GM12878 (cell line): ENCODE measurements at regions of chr2 and their contacts with region 1.

Region 1: GRCh38 chr2:66832646-66833435 is 397.9 kb downstream of the MEIS1 start:
- DNase-seq: no peak
- ATAC-seq: no peak
- H3K4me3 ChIP-seq: no peak overlapping the region
- H3K27ac ChIP-seq: no peak overlapping the region
- H3K4me1 ChIP-seq: no peaks in the 10 kb centered on the region
- H3K27me3 ChIP-seq: no peaks in the 10 kb centered on the region
- CTCF ChIP-seq: no peak
- EP300 ChIP-seq: no peak
- POLR2A ChIP-seq: no peak
- RAD21 ChIP-seq: no peak

Region 2: GRCh38 chr2:66843847-66844246 is 11.0 kb after region 1 on chr2:
- CTCF ChIA-PET with region 1: interaction called, 3 read pairs
- POLR2A ChIA-PET with region 1: no interaction called
- RAD21 ChIA-PET with region 1: no interaction called
- SMC1A ChIA-PET with region 1: interaction called, 10 read pairs
- in situ Hi-C with region 1: no loop called
- intact Hi-C with region 1: no loop called
- DNase-seq: no peak
- ATAC-seq: no peak
- H3K4me3 ChIP-seq: no peak overlapping the region
- H3K27ac ChIP-seq: no peak overlapping the region
- H3K4me1 ChIP-seq: no peaks in the 10 kb centered on the region
- H3K27me3 ChIP-seq: no peaks in the 10 kb centered on the region
- CTCF ChIP-seq: no peak
- EP300 ChIP-seq: no peak
- POLR2A ChIP-seq: no peak
- RAD21 ChIP-seq: no peak